PC-9 (cell line): ENCODE measurements at regions of chr18 and their contacts with region 1.

Region 1: DNA sequence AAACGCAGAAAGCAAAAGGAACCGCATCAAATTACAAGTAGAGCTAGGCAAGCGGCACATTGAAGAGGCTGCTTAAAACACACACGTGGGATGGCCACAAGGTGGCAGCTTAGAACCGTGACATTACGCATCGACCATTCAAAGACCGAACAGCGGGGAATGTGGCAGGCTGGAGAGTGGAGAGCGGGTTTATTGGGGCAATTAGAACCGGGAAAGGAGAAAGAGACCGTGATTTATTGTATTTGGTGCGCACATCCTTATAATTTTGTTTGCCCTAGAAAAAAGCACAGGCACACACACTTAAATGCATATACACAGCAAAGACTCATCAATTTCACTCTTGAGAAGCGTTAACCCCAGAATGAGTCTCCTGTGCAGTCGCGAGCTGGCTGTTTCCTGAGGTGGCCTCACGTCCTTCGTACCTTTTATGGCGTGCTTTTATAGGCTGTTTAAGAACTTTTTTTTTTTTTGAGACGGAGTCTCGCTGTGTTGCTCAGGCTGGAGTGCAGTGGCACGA is 31.7 kb upstream of the MEP1B start:
- DNase-seq: peak; percentile 53 to 55
- H3K4me3 ChIP-seq: no peak overlapping the region
- H3K27ac ChIP-seq: no peak overlapping the region
- H3K4me1 ChIP-seq: no peaks in the 10 kb centered on the region
- H3K27me3 ChIP-seq: no peaks in the 10 kb centered on the region
- CTCF ChIP-seq: peak; percentile 74

Region 2: GRCh38 chr18:32175265-32175664 is 17.1 kb after region 1 on chr18:
- CTCF ChIA-PET with region 1: no interaction called
- POLR2A ChIA-PET with region 1: no interaction called
- intact Hi-C with region 1: no loop called
- DNase-seq: no peak
- H3K4me3 ChIP-seq: no peak overlapping the region
- H3K27ac ChIP-seq: no peak overlapping the region
- H3K4me1 ChIP-seq: no peaks in the 10 kb centered on the region
- H3K27me3 ChIP-seq: no peaks in the 10 kb centered on the region
- CTCF ChIP-seq: no peak

Region 3: DNA sequence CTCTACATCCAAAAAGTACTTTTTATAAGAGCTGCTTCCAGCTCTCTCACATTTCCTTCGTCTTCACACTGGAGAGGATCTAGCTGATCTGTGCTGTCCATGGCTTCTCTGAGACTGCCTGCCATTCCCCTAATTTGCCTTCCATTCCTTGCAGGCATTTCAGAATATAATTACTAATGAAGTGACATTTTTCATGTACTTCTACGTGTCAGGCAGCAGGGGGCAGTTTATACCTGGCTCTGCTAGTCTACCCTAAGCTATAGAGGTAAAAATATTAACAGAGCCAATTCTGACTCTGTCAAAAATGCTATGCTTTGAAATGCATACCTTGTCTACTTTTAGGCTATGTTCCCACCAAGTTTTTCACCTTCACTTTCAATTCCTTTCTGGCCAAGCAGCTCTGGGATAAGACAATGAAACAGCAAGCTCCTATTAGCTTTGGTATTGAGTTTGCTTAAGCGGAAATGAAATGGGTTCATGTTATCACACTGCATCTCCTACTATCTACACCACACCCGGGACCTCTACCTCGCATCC is 113.6 kb after region 1 on chr18:
- CTCF ChIA-PET with region 1: no interaction called
- POLR2A ChIA-PET with region 1: no interaction called
- intact Hi-C with region 1: loop called (anchors 10 kb)
- DNase-seq: peak in 1 of 2 experiments; percentile 12
- H3K4me3 ChIP-seq: no peak overlapping the region
- H3K27ac ChIP-seq: no peak overlapping the region
- H3K4me1 ChIP-seq: no peaks in the 10 kb centered on the region
- H3K27me3 ChIP-seq: no peaks in the 10 kb centered on the region
- CTCF ChIP-seq: peak; percentile 79

Region 4: DNA sequence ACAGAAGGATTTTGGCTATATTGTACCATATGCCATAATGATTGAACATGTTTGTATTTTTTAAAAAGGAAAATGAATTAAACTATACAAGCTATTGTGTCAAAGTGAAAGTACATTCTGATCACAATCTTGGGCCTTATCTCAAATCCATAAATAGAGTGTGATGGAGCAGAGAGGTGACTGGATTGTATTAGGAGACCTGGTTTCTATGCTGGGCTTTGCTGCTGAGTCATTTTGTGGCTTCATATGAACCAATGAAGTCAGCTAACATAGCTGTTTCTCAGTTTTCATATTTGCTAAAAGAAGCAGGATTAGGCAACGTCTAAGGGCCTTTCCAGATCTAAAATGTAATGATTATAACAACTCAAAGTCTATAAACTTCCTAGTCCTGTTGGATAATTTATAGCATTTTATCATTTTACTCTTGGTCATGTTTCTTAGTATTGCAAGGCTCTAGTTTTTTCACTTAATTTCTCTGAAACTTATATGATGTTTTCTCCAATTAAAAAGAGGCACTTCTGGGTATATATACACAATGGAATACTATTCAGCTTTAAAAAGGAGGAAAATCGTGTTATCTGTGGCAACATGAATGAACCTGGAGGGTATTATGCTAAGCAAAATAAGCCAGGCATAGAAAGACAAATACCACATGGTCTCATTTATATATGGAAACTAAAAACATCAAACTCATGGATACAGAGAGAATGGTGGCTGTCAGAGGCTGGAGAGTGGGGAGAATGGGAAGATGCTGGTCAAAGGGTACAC is 144.0 kb after region 1 on chr18:
- CTCF ChIA-PET with region 1: no interaction called
- POLR2A ChIA-PET with region 1: interaction called, 11 read pairs
- intact Hi-C with region 1: no loop called
- DNase-seq: peak; percentile 24 to 84
- H3K4me3 ChIP-seq: no peak overlapping the region
- H3K27ac ChIP-seq: peak overlapping the region; percentile 84
- H3K4me1 ChIP-seq: peaks cover 20% of the 10 kb centered on the region
- H3K27me3 ChIP-seq: no peaks in the 10 kb centered on the region
- CTCF ChIP-seq: no peak

Region 5: GRCh38 chr18:32454593-32454992 is 296.4 kb after region 1 on chr18:
- CTCF ChIA-PET with region 1: no interaction called
- POLR2A ChIA-PET with region 1: no interaction called
- intact Hi-C with region 1: no loop called
- DNase-seq: no peak
- H3K4me3 ChIP-seq: no peak overlapping the region
- H3K27ac ChIP-seq: no peak overlapping the region
- H3K4me1 ChIP-seq: no peaks in the 10 kb centered on the region
- H3K27me3 ChIP-seq: no peaks in the 10 kb centered on the region
- CTCF ChIP-seq: no peak